Activated naive CD4-positive, alpha-beta T cell treated with anti-CD3 and anti-CD28 coated beads for 36 hours (primary cell): ENCODE measurements at regions of chr11 and their contacts with region 1.

Region 1: DNA sequence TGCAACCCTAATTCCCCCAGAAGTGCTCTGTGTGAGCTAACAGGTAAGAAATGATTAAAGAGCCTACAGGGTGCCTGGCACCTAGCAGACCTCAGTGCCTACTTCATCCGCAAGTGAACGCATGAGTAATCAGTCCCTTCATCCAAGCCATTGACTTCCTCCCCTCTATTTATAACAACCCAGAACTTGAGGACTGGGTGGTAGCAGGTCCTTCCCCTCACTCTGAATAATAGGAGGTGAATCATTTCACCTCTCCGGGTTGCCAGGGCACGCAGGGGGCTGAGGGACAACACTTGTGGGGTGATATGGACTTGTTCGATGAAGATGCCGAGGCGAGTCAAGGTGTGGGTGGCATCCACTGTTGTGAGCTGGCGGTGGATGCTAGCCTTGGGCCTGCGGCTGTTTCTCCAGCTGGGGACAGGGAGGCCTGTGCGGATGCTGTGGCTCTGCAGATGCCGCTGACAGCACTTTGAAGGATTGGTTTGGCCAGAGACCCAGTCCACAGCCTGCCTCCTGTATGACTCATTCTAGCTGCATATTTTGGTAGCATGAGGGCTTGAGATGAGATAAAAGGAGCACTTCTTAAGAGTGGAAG is 11.7 kb upstream of the SORL1-AS1 start:
- DNase-seq: peak; percentile 94
- H3K4me3 Mint-ChIP-seq: peak overlapping the region; percentile 65
- H3K27ac Mint-ChIP-seq: peak overlapping the region; percentile 96
- H3K4me1 Mint-ChIP-seq: peaks cover 96% of the 10 kb centered on the region
- H3K27me3 Mint-ChIP-seq: no peaks in the 10 kb centered on the region

Region 2: DNA sequence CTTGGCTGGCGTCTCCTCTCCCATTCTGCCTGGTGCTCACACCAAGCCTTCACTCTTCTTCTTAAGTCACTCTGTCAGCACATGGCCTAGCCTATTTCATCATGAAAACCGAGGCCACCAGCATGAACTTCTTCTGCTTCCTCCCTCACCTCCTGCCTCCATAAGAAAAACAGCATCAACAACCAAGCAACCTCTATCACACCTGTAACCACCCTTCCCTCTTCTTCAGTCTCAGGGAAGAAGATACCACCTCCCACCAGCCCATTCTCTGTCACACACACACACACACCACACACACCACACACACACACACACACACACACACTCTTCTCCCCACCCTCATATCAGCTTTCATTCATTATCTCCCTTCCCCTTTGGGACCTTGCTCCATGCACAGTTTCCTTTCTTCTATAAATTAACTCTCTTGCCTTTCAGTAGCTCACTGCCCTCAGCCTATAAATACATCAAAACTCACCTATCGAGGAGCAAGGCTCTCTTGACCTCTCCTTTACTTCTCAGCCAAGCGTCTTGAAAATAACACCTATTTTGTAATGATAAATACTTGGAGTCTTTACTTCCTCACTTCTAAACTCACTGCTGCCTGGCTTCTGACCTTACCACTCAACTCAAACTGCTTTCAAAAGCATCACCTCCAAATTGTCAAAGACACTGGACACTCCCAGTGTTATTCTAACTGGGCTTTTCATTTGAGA is 135.3 kb before region 1 on chr11:
- CTCF ChIA-PET with region 1: no interaction called
- intact Hi-C with region 1: loop called (anchors 1 kb)
- DNase-seq: peak; percentile 30
- H3K4me3 Mint-ChIP-seq: no peak overlapping the region
- H3K27ac Mint-ChIP-seq: no peak overlapping the region
- H3K4me1 Mint-ChIP-seq: no peaks in the 10 kb centered on the region
- H3K27me3 Mint-ChIP-seq: no peaks in the 10 kb centered on the region

Region 3: DNA sequence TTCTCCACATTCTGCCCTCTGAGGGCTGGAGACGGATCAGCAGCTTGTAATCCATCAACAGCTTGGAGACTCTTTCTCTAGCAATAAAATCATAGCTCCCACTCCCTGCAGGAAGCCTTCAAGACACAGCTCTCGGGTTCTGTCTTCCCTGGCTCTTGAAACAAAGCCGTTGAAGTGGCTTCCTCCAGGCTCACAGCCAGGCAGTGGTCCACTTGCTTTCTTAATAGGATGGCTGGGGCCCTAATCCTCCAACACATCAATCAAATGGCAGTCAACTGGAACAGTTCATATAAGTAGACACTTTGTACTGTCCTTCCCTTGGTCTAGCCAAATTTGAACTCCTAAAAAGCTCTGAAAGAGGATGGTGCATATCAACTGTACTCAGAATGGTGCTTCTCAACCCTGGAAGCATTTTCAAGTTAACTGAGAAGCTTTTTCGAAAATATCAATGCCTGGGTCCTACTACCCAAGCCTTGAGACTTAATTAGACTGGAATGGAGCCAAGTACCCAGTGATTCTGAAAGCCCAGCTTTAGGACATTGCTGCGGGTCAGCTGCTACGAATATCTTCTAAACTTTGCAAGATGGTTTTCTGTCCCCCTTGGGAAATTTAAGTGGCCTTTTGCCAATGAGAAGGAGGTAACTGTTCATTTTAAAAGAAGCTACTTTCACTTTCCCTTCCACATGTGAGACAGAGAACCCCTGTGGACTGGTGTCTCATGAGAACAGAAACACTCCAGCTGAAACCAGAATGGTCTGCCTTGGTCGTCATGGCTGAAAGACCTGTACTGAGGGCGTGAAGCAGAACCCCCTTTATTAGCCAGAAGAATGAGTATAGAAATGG is 97.2 kb before region 1 on chr11:
- CTCF ChIA-PET with region 1: no interaction called
- intact Hi-C with region 1: no loop called
- DNase-seq: peak; percentile 54
- H3K4me3 Mint-ChIP-seq: peak overlapping the region; percentile 54
- H3K27ac Mint-ChIP-seq: peak overlapping the region; percentile 48
- H3K4me1 Mint-ChIP-seq: peaks cover 42% of the 10 kb centered on the region
- H3K27me3 Mint-ChIP-seq: no peaks in the 10 kb centered on the region

Region 4: DNA sequence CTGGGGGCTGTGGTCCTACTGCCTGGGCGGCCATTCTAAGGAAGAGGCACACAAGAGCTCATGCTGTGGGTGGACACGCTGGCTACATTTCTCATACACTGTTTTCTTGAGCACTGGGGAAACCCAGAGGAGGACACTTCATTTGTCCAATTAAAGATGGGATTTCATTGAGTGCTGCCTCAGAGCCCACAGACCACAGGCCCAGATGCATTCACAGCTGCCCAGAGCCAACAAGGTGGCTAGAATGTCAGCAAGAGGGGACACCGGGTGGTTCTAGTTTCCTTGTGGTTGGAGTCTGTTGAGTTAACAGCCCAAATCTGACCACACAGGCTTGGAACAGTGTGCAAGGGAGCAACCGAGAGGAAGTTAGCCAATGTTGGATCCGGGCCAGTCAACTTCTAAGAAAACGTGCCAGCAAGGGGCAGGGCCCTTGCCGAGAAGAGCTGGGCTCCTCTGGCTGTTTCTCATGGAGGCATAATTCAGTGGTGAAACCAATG is 47.3 kb before region 1 on chr11:
- CTCF ChIA-PET with region 1: no interaction called
- intact Hi-C with region 1: no loop called
- DNase-seq: peak; percentile 64
- H3K4me3 Mint-ChIP-seq: no peak overlapping the region
- H3K27ac Mint-ChIP-seq: peak overlapping the region; percentile 62
- H3K4me1 Mint-ChIP-seq: peaks cover 66% of the 10 kb centered on the region
- H3K27me3 Mint-ChIP-seq: no peaks in the 10 kb centered on the region

Region 5: DNA sequence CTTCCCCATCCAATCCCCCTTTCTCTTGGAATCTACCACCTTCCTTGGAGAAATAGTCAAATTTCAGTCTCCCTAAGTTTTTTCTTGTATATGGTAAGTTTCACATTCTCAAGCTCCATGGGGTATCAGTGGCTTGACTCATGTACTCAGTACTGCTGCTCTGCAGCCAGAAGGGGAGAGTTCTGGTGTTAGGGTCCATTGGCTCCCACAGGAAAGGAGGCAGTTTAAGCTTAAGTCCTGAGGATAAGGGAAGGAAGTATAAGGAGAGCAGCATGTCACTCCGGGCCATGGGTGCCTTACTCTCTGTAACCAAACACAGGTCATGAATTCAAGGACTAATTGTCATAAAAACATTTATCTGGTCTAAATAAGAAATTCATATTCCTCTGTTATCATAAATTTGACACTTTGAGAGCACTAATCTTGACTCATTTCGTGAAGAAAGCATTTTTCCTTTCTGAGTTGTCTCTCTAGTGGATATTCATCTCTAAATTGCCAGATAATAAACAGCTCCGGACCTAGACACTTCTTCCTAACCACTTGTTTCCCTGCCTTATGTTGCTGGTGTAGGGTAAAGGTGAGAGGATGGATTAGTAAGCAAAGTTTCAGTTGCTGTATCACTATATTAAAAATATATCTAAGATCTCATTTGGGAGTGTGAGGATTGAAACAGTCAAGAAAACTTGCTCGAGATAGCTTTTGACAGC is 32.5 kb before region 1 on chr11:
- CTCF ChIA-PET with region 1: interaction called, 3 read pairs
- intact Hi-C with region 1: loop called (anchors 1 kb)
- DNase-seq: no peak
- H3K4me3 Mint-ChIP-seq: no peak overlapping the region
- H3K27ac Mint-ChIP-seq: no peak overlapping the region
- H3K4me1 Mint-ChIP-seq: peaks cover 45% of the 10 kb centered on the region
- H3K27me3 Mint-ChIP-seq: no peaks in the 10 kb centered on the region

Region 6: DNA sequence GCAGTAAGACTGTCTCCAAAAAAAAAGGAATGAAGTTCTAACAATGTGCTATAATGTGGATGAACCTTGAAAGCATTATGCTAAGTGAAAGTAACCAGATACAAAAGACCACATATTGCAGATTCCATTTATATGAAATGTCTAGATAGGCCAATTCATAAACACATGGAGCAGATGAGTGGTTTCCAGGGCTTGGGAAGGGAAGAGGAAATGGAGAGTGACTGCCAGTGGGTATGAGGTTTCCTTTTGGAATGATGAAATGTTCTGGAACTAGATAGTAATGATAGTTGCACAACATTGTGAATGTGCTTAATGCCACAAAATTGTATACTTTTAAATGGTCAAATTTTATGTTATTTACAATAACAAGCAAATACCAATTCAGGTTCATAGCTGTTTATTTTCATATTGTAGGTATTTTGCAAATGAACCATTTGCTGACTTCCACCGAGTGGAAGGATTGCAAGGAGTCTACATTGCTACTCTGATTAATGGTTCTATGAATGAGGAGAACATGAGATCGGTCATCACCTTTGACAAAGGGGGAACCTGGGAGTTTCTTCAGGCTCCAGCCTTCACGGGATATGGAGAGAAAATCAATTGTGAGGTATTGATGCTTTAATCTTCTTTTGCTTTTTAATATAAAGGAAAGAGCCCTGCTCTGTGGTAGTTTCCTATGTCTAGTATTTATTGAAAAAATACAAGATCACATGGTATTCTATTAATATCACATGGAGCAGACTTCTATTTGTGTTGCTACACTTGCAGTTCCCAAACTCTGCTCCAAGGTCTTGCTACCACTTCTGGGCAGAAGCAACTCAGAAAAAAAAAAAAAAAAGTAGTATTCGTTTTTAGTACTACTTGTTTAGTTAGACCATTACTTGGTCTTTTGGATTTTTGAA is 56.0 kb after region 1 on chr11:
- CTCF ChIA-PET with region 1: no interaction called
- intact Hi-C with region 1: loop called (anchors 1 kb)
- DNase-seq: no peak
- H3K4me3 Mint-ChIP-seq: no peak overlapping the region
- H3K27ac Mint-ChIP-seq: peak overlapping the region; percentile 39
- H3K4me1 Mint-ChIP-seq: peaks cover 43% of the 10 kb centered on the region
- H3K27me3 Mint-ChIP-seq: no peaks in the 10 kb centered on the region

Region 7: DNA sequence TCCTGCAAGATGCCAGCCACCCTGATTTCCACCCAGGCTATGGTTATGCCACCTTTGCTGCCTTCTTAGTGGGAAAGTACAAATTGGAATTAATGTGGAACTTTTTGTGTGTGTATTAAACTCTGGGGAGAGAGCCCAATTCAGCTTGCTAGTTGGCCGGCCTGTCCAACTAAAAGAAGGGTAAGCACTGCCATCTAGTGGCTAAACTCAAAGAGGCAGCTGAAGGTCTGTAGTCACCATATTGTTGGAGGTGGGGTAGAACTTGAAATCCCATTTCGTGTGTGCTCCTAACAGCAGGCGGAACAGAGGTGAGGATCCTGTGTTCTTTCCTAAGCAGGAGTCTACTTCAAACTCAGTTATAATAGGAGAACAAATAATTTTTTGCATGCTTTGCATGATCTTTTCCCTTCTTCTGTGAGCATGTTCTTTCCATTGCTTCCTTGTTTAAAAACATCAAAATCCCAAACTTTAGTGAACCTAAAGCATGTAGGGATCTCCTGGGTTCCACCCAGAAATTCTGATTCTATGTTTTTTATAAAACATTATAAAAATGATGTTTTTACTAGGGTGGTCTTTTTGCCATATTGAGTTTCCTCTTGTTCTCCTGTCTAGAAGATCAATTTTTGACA is 127.1 kb after region 1 on chr11:
- CTCF ChIA-PET with region 1: interaction called, 4 read pairs
- intact Hi-C with region 1: loop called (anchors 1 kb)
- DNase-seq: peak; percentile 87
- H3K4me3 Mint-ChIP-seq: no peak overlapping the region
- H3K27ac Mint-ChIP-seq: no peak overlapping the region
- H3K4me1 Mint-ChIP-seq: peaks cover 14% of the 10 kb centered on the region
- H3K27me3 Mint-ChIP-seq: no peaks in the 10 kb centered on the region

Region 8: DNA sequence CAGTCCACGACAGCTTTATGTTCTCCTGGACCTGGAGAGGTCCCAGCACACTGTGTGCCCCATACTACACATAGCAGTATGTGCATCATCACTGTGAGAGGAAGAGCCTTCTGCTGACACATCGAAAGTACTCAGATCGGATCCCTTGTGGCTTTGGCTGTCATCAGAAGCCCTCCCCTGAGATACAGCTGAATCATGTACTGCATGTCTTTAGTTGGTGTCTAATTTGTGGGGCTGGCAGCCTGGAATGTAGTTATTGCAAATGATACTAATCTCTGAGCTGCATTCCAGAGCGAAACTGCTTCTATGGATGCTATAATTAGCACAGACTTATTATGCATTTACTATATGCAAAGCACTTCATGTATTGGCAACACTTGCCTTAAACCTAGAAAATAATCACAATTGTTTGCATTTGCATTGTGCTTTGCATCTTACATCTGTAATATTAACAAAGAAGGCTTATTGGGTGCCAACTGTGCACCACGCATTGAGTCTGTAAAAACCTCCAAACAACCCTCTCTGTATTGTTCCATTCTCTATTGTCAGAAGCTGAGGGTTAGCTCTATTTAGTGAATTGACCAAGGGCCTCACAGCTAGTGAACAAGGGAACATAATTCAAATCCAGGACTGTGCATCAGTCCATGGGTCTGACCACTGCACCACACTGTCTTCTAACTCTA is 1284.7 kb after region 1 on chr11:
- CTCF ChIA-PET with region 1: no interaction called
- intact Hi-C with region 1: loop called (anchors 5 kb)
- DNase-seq: peak; percentile 83
- H3K4me3 Mint-ChIP-seq: no peak overlapping the region
- H3K27ac Mint-ChIP-seq: no peak overlapping the region
- H3K4me1 Mint-ChIP-seq: peaks cover 17% of the 10 kb centered on the region
- H3K27me3 Mint-ChIP-seq: peaks cover 3% of the 10 kb centered on the region